Gastrocnemius medialis (tissue), 4 donors: ENCODE measurements at regions of chr13 and their contacts with region 1.

Region 1: DNA sequence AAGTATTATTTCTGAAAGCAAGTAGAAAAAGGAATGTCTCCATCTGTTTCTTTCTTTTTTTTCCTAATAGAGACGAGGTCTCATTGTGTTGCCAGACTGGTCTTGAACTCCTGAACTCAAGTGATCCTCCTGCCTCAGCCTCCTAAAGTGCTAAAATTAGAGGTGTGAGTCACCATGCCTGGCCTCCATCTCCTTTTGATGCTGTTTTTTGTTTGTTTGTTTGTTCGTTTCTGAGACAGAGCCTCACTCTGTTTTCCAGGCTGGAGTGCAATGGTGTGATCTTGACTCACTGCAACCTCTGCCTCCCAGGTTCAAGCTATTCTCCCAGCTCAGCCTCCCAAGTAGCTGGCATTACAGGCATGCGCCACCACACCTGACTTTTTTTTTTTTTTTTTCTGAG is 14.5 kb upstream of the ABCC4 start:
- DNase-seq: no peak
- ATAC-seq: no peak
- H3K4me3 ChIP-seq: no peak overlapping the region
- H3K27ac ChIP-seq: peak overlapping the region in 2 of 4 donors; percentile 79 to 85
- H3K4me1 ChIP-seq: peaks cover 8 to 22% of the 10 kb centered on the region in 2 donors
- H3K27me3 ChIP-seq: no peaks in the 10 kb centered on the region
- CTCF ChIP-seq: no peak
- POLR2A ChIP-seq: no peak

Region 2: GRCh38 chr13:95335667-95336066 is 19.9 kb after region 1 on chr13:
- in situ Hi-C with region 1: no loop called
- intact Hi-C with region 1: loop called (anchors 2 kb)
- DNase-seq: no peak
- ATAC-seq: no peak
- H3K4me3 ChIP-seq: no peak overlapping the region
- H3K27ac ChIP-seq: no peak overlapping the region
- H3K4me1 ChIP-seq: peaks cover 5 to 12% of the 10 kb centered on the region in 2 donors
- H3K27me3 ChIP-seq: no peaks in the 10 kb centered on the region
- CTCF ChIP-seq: no peak
- POLR2A ChIP-seq: no peak

Region 3: DNA sequence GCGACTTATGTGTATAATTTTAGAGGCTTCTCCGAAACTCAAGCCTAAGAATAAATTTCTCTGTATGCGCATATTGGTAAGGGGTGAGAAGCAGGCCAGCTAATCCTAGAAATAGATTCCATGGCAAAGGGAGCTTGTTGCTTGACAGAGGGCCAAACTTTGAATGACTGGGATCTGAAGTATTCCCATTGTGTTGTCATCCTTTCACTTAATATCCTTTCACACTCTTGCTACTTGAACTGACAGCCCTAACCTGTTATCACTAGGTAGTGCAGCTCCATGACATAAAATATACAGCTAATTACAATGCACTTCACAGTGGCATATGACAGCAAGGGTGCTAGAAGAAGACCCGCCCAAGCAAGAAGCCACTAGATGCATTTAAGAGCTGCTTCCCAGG is 1368.7 kb after region 1 on chr13:
- in situ Hi-C with region 1: no loop called
- intact Hi-C with region 1: no loop called
- DNase-seq: no peak
- ATAC-seq: no peak
- H3K4me3 ChIP-seq: no peak overlapping the region
- H3K27ac ChIP-seq: no peak overlapping the region
- H3K4me1 ChIP-seq: no peaks in the 10 kb centered on the region
- H3K27me3 ChIP-seq: no peaks in the 10 kb centered on the region
- CTCF ChIP-seq: no peak
- POLR2A ChIP-seq: no peak